ENCODE measurements at regions of chr4 and their contacts with region 1.

Region 1: DNA sequence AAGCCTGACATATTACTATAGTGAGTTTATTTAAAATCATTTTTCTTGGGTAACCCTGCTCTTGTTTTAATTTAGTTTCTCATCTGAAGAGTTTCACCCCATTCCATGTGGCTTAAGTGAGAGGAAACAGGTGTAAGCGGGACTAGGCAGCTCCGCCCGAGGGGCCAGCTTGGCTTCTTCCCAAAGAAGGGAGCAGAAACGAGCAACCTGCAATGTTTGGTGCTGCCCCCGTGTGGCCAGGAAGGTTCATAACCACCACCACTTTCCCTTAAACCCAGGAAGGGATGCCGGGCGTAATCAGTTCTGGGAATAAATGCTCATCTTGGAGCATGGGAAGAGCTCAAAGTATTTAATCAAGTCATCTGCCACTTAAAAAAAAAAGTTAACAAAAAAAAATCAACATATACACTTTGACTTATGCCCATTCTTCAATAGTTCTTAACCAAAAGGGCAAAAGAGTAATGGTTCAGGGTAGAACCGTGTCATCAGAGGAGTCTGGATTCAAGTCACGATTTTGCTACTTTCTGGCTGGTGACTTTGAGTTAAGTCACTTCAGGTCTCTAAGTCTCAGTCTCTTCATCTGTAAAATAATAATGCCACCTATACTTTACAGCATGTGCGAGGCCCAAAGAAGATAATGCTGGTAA is 147.9 kb downstream of the NSUN7 start:
- DNase-seq: peak; percentile 30
- ATAC-seq: peak; percentile 80
- H3K4me3 ChIP-seq: no peak overlapping the region
- H3K27ac ChIP-seq: no peak overlapping the region
- H3K4me1 ChIP-seq: no peaks in the 10 kb centered on the region
- H3K27me3 ChIP-seq: no peaks in the 10 kb centered on the region
- CTCF ChIP-seq: peak; percentile 87

Region 2: DNA sequence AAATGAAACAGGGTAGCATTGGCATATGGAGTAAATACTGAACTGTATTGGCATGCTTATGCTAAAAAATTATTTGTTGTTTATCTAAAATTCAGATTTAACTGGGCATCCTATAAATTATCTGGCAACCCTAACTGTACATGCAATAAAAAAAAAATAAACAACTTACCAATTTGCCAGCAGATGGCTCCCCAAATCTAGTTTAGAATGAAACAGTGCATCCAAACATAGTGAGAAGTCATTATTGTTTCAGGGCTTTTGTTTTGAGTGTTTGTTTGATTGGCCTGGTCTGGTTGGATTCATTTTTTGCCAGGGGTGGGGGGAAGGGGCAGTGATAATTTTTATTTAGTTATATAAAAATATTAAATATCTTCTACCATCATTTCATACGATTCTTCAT is 160.8 kb before region 1 on chr4:
- CTCF ChIA-PET with region 1: interaction called, 3 read pairs
- POLR2A ChIA-PET with region 1: no interaction called
- in situ Hi-C with region 1: no loop called
- intact Hi-C with region 1: loop called (anchors 1 kb)
- DNase-seq: peak; percentile 25
- ATAC-seq: no peak
- H3K4me3 ChIP-seq: no peak overlapping the region
- H3K27ac ChIP-seq: no peak overlapping the region
- H3K4me1 ChIP-seq: no peaks in the 10 kb centered on the region
- H3K27me3 ChIP-seq: no peaks in the 10 kb centered on the region
- CTCF ChIP-seq: peak; percentile 44; the same call in 1 of the 2 replicates

Region 3: DNA sequence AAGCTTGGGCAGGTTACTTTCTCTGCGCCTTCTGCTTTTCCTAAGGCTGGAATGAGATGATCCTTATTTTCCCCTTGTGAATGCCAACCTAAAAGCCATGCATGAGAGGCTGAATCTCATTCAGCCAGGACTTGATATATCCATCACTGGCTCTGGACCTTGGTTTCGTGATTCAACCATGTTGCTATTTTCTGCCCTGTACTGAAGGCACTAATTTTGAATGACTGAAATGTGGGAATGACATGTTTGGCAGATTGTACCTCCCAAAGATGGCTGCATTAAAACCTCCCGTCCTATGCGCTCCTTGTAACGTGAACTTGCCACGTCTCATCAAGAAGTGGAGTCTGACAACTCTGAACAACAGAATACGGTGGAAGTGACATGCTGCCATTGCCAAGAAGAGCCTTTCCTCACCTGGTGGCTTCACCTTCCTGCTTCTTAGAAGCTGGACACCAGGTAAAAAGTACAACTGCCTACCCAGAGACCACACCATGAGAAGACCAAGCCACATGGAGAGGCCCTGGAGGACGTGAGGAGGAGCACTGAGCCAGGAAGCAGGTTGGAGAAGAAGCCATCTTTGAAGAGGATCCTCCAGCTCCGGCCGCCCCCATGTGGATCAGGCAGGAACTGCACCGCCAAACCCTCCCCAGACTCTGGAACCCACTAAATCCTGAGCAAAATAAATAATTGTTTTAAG is 26.6 kb after region 1 on chr4:
- CTCF ChIA-PET with region 1: interaction called, 13 read pairs
- POLR2A ChIA-PET with region 1: no interaction called
- in situ Hi-C with region 1: no loop called
- intact Hi-C with region 1: no loop called
- DNase-seq: peak; percentile 27
- ATAC-seq: peak; percentile 73; the same call in 1 of the 2 replicates
- H3K4me3 ChIP-seq: no peak overlapping the region
- H3K27ac ChIP-seq: no peak overlapping the region
- H3K4me1 ChIP-seq: no peaks in the 10 kb centered on the region
- H3K27me3 ChIP-seq: no peaks in the 10 kb centered on the region
- CTCF ChIP-seq: peak; percentile 88

Region 4: DNA sequence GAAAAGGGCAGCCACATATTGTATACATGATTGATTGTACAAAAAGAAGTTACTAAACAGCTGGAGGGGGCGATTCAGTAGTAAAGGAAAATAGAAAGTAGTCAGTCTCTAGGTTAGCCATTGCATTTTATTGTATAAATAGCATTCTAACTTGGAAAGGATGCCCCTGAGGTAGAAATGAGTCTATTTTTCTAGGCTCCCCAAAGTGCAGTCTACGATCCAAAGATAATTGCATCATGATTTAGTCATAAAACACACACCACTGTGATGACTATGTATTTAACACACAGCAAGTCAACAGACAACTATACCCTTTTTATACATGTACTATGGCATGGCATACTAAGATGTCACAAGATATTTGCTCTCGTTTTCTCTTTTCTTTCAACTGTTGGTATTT is 111.7 kb after region 1 on chr4:
- CTCF ChIA-PET with region 1: no interaction called
- POLR2A ChIA-PET with region 1: no interaction called
- in situ Hi-C with region 1: no loop called
- intact Hi-C with region 1: no loop called
- DNase-seq: peak; percentile 68
- ATAC-seq: peak; percentile 83; the same call in 1 of the 2 replicates
- H3K4me3 ChIP-seq: no peak overlapping the region; a peak in 1 of 4 replicates
- H3K27ac ChIP-seq: no peak overlapping the region
- H3K4me1 ChIP-seq: no peaks in the 10 kb centered on the region
- H3K27me3 ChIP-seq: no peaks in the 10 kb centered on the region
- CTCF ChIP-seq: no peak